Esophagus squamous epithelium (tissue), 5 donors: ENCODE measurements at regions of chr17 and their contacts with region 1.

Region 1: GRCh38 chr17:60639019-60639330 is 38.7 kb upstream of the BCAS3 start:
- DNase-seq: no peak
- H3K4me3 ChIP-seq: no peak overlapping the region
- H3K27ac ChIP-seq: no peak overlapping the region
- H3K4me1 ChIP-seq: peaks cover 0 to 11% (median 3%) of the 10 kb centered on the region in 3 donors
- H3K27me3 ChIP-seq: no peaks in the 10 kb centered on the region
- CTCF ChIP-seq: peak in 1 of 6 experiments; percentile 5
- POLR2A ChIP-seq: no peak

Region 2: GRCh38 chr17:60577147-60577915 is 61.6 kb before region 1 on chr17:
- intact Hi-C with region 1: loop called (anchors 5 kb)
- DNase-seq: no peak
- H3K4me3 ChIP-seq: peak overlapping the region; percentile 17 to 53 (median 32)
- H3K27ac ChIP-seq: peak overlapping the region; percentile 42 to 79 (median 66)
- H3K4me1 ChIP-seq: peaks cover 0 to 34% (median 10%) of the 10 kb centered on the region in 3 donors
- H3K27me3 ChIP-seq: no peaks in the 10 kb centered on the region
- CTCF ChIP-seq: peak in 3 of 6 experiments; percentile 22 to 24 (median 22)
- POLR2A ChIP-seq: no peak